Naive thymus-derived CD4-positive, alpha-beta T cell (primary cell): ENCODE measurements at regions of chr7 and their contacts with region 1.

Region 1: DNA sequence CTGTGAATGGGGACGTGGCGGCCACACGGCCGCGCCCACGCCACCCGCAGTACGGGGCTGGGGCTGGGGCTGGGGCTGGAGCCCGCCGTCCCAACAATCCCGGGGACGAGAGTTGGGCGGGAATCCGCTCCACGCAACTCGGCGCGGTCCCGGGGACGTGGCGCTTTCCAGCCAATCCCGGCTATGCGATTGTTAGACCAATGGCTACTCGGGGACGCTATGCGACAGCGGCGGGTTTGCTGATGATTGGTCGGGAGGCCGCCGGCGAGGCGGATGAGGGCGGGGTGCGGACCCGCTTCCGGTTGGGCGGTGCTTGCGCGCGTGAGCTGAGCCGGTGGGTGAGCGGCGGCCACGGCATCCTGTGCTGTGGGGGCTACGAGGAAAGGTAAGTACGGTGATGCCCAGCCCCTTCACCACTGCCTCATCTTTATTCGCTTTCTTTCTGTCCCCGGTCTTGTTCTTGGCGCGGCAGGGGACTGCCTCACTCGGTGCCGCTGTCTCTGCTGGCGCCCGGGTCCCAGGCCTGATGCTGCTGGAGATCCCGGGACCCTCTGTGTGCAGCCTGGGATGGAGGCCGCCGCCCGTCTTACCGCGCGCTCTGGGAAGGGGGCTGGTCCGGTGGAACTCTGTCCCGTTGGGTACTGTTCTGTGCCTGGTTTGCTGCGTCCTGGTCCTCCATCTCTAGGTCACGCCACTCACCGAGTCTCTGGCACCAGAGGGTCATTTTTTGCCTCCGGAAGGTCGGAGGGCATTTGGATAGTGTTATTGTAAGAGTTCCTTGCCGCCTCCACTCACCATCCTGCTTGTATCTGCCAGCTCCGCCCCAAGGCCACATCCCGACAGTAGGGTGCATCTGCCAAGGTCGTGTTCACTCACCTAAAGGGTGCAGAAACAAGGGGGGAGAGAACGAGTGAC is at the start of gene CALU:
- DNase-seq: peak; percentile 87 to 95 (median 94)
- ATAC-seq: peak; percentile 98
- H3K4me3 ChIP-seq: peak within 1 kb of the TSS; percentile 86
- H3K4me3 Mint-ChIP-seq: peak within 1 kb of the TSS; percentile 89 to 100 (median 97)
- H3K27ac ChIP-seq: peak within 1 kb of the TSS; percentile 85
- H3K27ac Mint-ChIP-seq: peak within 1 kb of the TSS; percentile 96 to 99 (median 98)
- H3K4me1 ChIP-seq: peaks cover 13% of the 10 kb centered on the region in 2 donors
- H3K4me1 Mint-ChIP-seq: peaks cover 11 to 52% (median 45%) of the 10 kb centered on the region in 7 donors
- H3K27me3 ChIP-seq: no peaks in the 10 kb centered on the region
- H3K27me3 Mint-ChIP-seq: peaks cover 0 to 5% (median 0%) of the 10 kb centered on the region in 5 donors
- total RNA-seq, gene CALU: 18.6 to 36.2 (median 22.6) TPM

Region 2: GRCh38 chr7:128343554-128344430 is 395.5 kb before region 1 on chr7 and contains the start of gene RBM28:
- CTCF ChIA-PET with region 1: no interaction called
- POLR2A ChIA-PET with region 1: no interaction called
- intact Hi-C with region 1: loop called in 1 of 2 experiments (anchors 1 kb)
- DNase-seq: peak; percentile 80 to 93 (median 90)
- ATAC-seq: peak; percentile 98
- H3K4me3 ChIP-seq: peak within 1 kb of the TSS; percentile 97
- H3K4me3 Mint-ChIP-seq: peak within 1 kb of the TSS; percentile 89 to 98 (median 96)
- H3K27ac ChIP-seq: peak within 1 kb of the TSS; percentile 83
- H3K27ac Mint-ChIP-seq: peak within 1 kb of the TSS; percentile 83 to 96 (median 93)
- H3K4me1 ChIP-seq: peaks cover 16 to 20% of the 10 kb centered on the region in 2 donors
- H3K4me1 Mint-ChIP-seq: peaks cover 19 to 44% (median 34%) of the 10 kb centered on the region in 7 donors
- H3K27me3 ChIP-seq: no peaks in the 10 kb centered on the region
- H3K27me3 Mint-ChIP-seq: peaks cover 0 to 15% (median 7%) of the 10 kb centered on the region in 5 donors
- total RNA-seq, gene RBM28: 30.1 to 51.0 (median 43.5) TPM

Region 3: DNA sequence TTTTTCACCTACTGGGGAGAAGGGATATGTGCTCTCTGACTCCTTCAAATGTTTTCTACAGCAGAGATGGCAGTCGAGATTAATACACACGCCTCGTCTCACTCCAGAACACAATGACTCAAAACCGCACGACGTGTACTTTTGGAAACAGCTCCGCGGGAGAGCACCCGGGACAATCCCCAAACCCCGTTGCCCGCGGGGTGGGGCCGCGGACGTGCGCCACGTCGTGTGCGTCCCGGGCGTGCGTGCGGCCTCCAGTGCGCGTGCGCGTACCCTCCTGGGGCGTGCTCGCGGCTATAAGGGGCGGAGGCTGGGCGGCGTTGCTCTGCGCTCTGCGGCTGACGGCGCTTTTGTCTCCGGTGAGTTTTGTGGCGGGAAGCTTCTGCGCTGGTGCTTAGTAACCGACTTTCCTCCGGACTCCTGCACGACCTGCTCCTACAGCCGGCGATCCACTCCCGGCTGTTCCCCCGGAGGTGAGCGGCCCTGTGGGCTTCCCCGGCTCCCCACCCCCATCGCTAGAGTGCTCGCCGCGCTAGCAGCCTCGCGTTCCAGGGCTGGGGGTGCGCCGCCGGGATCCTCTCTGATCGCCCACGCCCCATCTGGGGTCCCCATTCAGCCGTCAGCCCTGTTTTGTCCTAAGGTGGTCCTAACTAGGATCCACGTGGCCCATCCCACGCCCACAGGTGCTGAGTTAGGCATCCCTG is 283.6 kb before region 1 on chr7 and contains the start of gene HILPDA:
- CTCF ChIA-PET with region 1: no interaction called
- POLR2A ChIA-PET with region 1: no interaction called
- intact Hi-C with region 1: loop called in 1 of 2 experiments (anchors 1 kb)
- DNase-seq: peak; percentile 90 to 98 (median 93)
- ATAC-seq: peak; percentile 95
- H3K4me3 ChIP-seq: peak within 1 kb of the TSS; percentile 85
- H3K4me3 Mint-ChIP-seq: peak within 1 kb of the TSS; percentile 81 to 96 (median 92)
- H3K27ac ChIP-seq: peak within 1 kb of the TSS; percentile 83
- H3K27ac Mint-ChIP-seq: peak within 1 kb of the TSS; percentile 72 to 98 (median 89)
- H3K4me1 ChIP-seq: peaks cover 12 to 22% of the 10 kb centered on the region in 2 donors
- H3K4me1 Mint-ChIP-seq: peaks cover 13 to 65% (median 22%) of the 10 kb centered on the region in 7 donors
- H3K27me3 ChIP-seq: no peaks in the 10 kb centered on the region
- H3K27me3 Mint-ChIP-seq: peaks cover 0 to 8% (median 0%) of the 10 kb centered on the region in 5 donors
- total RNA-seq, gene HILPDA: 2.4 to 39.5 (median 4.4) TPM

Region 4: GRCh38 chr7:128697302-128697905 is 41.9 kb before region 1 on chr7:
- CTCF ChIA-PET with region 1: no interaction called
- POLR2A ChIA-PET with region 1: no interaction called
- intact Hi-C with region 1: loop called in 1 of 2 experiments (anchors 2 kb)
- DNase-seq: peak; percentile 3 to 72 (median 18)
- ATAC-seq: peak; percentile 87
- H3K4me3 ChIP-seq: no peak overlapping the region
- H3K4me3 Mint-ChIP-seq: peak overlapping the region; percentile 48 to 87 (median 71)
- H3K27ac ChIP-seq: no peak overlapping the region
- H3K27ac Mint-ChIP-seq: peak overlapping the region in 2 of 9 donors; percentile 26 to 58
- H3K4me1 ChIP-seq: peaks cover 0 to 4% of the 10 kb centered on the region in 2 donors
- H3K4me1 Mint-ChIP-seq: peaks cover 5 to 14% (median 9%) of the 10 kb centered on the region in 7 donors
- H3K27me3 ChIP-seq: peaks cover 8 to 22% of the 10 kb centered on the region in 2 donors
- H3K27me3 Mint-ChIP-seq: peaks cover 55 to 70% (median 66%) of the 10 kb centered on the region in 5 donors

Region 5: GRCh38 chr7:128777156-128778123 is 38.1 kb after region 1 on chr7:
- CTCF ChIA-PET with region 1: no interaction called
- POLR2A ChIA-PET with region 1: no interaction called
- intact Hi-C with region 1: no loop called
- DNase-seq: no peak
- ATAC-seq: no peak
- H3K4me3 ChIP-seq: no peak overlapping the region
- H3K4me3 Mint-ChIP-seq: no peak overlapping the region
- H3K27ac ChIP-seq: no peak overlapping the region
- H3K27ac Mint-ChIP-seq: no peak overlapping the region
- H3K4me1 ChIP-seq: no peaks in the 10 kb centered on the region
- H3K4me1 Mint-ChIP-seq: no peaks in the 10 kb centered on the region
- H3K27me3 ChIP-seq: no peaks in the 10 kb centered on the region
- H3K27me3 Mint-ChIP-seq: peaks cover 0 to 2% (median 0%) of the 10 kb centered on the region in 5 donors

Region 6: GRCh38 chr7:128791121-128791961 is 52.0 kb after region 1 on chr7:
- CTCF ChIA-PET with region 1: no interaction called
- POLR2A ChIA-PET with region 1: interaction called, 4 read pairs
- intact Hi-C with region 1: loop called (anchors 1 to 5 kb)
- DNase-seq: peak; percentile 67 to 82 (median 76)
- ATAC-seq: peak; percentile 95
- H3K4me3 ChIP-seq: peak overlapping the region; percentile 64
- H3K4me3 Mint-ChIP-seq: peak overlapping the region; percentile 62 to 90 (median 80)
- H3K27ac ChIP-seq: peak overlapping the region; percentile 68
- H3K27ac Mint-ChIP-seq: peak overlapping the region in 4 of 9 donors; percentile 19 to 80 (median 61)
- H3K4me1 ChIP-seq: peaks cover 0 to 3% of the 10 kb centered on the region in 2 donors
- H3K4me1 Mint-ChIP-seq: peaks cover 6 to 29% (median 12%) of the 10 kb centered on the region in 7 donors
- H3K27me3 ChIP-seq: no peaks in the 10 kb centered on the region
- H3K27me3 Mint-ChIP-seq: peaks cover 0 to 36% (median 0%) of the 10 kb centered on the region in 5 donors

Region 7: DNA sequence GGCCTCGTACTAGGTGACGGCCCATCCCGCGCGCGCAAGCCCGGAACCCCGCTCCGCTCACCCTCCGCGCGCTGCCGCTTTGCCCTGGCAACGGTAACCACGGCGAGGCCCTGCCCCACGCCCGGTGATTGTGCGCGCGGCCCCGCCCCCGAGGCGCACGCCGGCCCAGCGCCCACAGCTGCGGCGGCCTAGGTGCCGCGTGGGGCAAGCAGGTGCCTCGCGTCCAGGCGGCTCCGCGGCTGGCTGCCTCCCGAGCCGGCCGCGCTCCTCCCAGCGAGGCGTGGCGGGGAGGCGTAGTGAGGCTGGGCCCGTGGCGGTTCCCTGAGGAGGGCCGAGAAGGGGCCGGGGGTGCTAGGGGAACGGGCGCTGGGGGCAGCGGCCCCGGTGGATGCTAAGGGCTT is 763.1 kb after region 1 on chr7 and contains the start of gene SMKR1:
- CTCF ChIA-PET with region 1: no interaction called
- POLR2A ChIA-PET with region 1: no interaction called
- intact Hi-C with region 1: loop called in 1 of 2 experiments (anchors 2 kb)
- DNase-seq: peak; percentile 86 to 94 (median 91)
- ATAC-seq: peak; percentile 98
- H3K4me3 ChIP-seq: peak within 1 kb of the TSS; percentile 64
- H3K4me3 Mint-ChIP-seq: peak within 1 kb of the TSS; percentile 75 to 91 (median 86)
- H3K27ac ChIP-seq: peak within 1 kb of the TSS; percentile 70
- H3K27ac Mint-ChIP-seq: peak within 1 kb of the TSS; percentile 70 to 93 (median 83)
- H3K4me1 ChIP-seq: peaks cover 4 to 7% of the 10 kb centered on the region in 2 donors
- H3K4me1 Mint-ChIP-seq: peaks cover 14 to 22% (median 16%) of the 10 kb centered on the region in 7 donors
- H3K27me3 ChIP-seq: no peaks in the 10 kb centered on the region
- H3K27me3 Mint-ChIP-seq: peaks cover 0 to 23% (median 0%) of the 10 kb centered on the region in 5 donors
- total RNA-seq, gene SMKR1: 1.1 to 2.5 (median 1.4) TPM

Region 8: GRCh38 chr7:129569811-129570215 is 830.5 kb after region 1 on chr7:
- CTCF ChIA-PET with region 1: no interaction called
- POLR2A ChIA-PET with region 1: no interaction called
- intact Hi-C with region 1: no loop called
- DNase-seq: no peak
- ATAC-seq: no peak
- H3K4me3 ChIP-seq: no peak overlapping the region
- H3K4me3 Mint-ChIP-seq: no peak overlapping the region
- H3K27ac ChIP-seq: no peak overlapping the region
- H3K27ac Mint-ChIP-seq: no peak overlapping the region
- H3K4me1 ChIP-seq: no peaks in the 10 kb centered on the region
- H3K4me1 Mint-ChIP-seq: peaks cover 0 to 5% (median 0%) of the 10 kb centered on the region in 7 donors
- H3K27me3 ChIP-seq: no peaks in the 10 kb centered on the region
- H3K27me3 Mint-ChIP-seq: peaks cover 10 to 25% (median 19%) of the 10 kb centered on the region in 5 donors